Panc1 (cell line): ENCODE measurements at regions of chr20 and their contacts with region 1.

Region 1: DNA sequence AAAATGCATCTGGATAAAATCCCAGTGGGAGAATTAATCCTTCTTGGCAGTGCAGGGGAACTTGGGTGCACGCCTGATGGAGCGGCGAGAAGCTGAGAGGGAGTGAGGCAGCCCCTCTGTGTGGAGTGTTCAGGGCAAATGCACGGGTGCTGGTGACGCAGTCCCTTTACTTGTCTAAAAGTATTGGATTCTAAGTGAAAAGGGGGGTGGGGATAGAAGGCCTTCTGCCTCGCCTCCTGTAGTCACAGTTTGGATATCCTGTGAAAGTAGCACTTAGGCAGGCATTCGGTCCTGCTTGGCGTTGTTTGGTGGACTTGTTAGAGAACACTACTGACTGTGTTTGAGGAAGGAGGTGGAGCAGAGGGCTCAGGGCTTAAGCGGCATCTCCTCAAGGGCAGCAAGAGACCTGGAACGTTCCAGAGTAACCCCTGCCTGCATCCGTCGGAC is 39.3 kb downstream of the PHACTR3 start:
- DNase-seq: no peak
- ATAC-seq: no peak
- H3K4me3 ChIP-seq: no peak overlapping the region
- H3K27ac ChIP-seq: no peak overlapping the region
- H3K4me1 ChIP-seq: no peaks in the 10 kb centered on the region
- H3K27me3 ChIP-seq: 0 out of 2 replicates have a peak, but pooled peaks cover 3% of the 10 kb centered on the region
- CTCF ChIP-seq: no peak

Region 2: GRCh38 chr20:59665656-59666494 is 22.2 kb after region 1 on chr20:
- CTCF ChIA-PET with region 1: no interaction called
- POLR2A ChIA-PET with region 1: no interaction called
- in situ Hi-C with region 1: no loop called
- intact Hi-C with region 1: loop called (anchors 2 kb)
- DNase-seq: no peak
- ATAC-seq: no peak
- H3K4me3 ChIP-seq: no peak overlapping the region
- H3K27ac ChIP-seq: no peak overlapping the region
- H3K4me1 ChIP-seq: no peaks in the 10 kb centered on the region
- H3K27me3 ChIP-seq: peaks cover 13% of the 10 kb centered on the region; the same call in 1 of the 2 replicates
- CTCF ChIP-seq: no peak

Region 3: DNA sequence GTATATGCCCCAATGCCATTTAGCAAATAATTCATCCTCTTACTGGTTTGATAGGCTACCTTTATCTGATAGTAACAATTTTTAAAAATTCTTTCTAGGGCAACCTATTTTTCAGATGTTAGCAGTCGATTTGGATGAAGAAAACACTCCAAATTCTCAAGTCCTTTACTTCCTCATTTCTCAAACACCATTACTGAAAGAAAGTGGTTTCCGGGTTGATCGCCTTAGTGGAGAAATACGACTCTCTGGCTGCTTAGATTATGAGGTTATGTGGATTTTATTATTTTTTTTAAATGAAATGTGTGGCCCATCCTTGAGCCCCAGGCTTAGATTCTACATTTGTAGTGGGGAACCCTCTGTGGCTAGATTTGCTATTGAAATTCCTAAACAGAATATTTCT is 340.9 kb after region 1 on chr20:
- CTCF ChIA-PET with region 1: no interaction called
- POLR2A ChIA-PET with region 1: no interaction called
- in situ Hi-C with region 1: no loop called
- intact Hi-C with region 1: no loop called
- DNase-seq: no peak
- ATAC-seq: no peak
- H3K4me3 ChIP-seq: no peak overlapping the region
- H3K27ac ChIP-seq: no peak overlapping the region
- H3K4me1 ChIP-seq: no peaks in the 10 kb centered on the region
- H3K27me3 ChIP-seq: no peaks in the 10 kb centered on the region
- CTCF ChIP-seq: no peak